K562 (cell line): ENCODE measurements at regions of chr5 and their contacts with region 1.

Region 1: GRCh38 chr5:173764321-173765029 is 123.7 kb upstream of the CPEB4 start:
- DNase-seq: peak; percentile 81 to 87 (median 84)
- ATAC-seq: peak; percentile 85
- H3K4me3 ChIP-seq: no peak overlapping the region; the same call in 1 of the 2 replicates
- H3K27ac ChIP-seq: peak overlapping the region; percentile 71
- H3K4me1 ChIP-seq: peaks cover 44 to 59% of the 10 kb centered on the region in 2 experiments
- H3K27me3 ChIP-seq: no peaks in the 10 kb centered on the region
- CTCF ChIP-seq: peak in 1 of 3 experiments; percentile 20; a peak in 1 of 6 replicates
- EP300 ChIP-seq: peak; percentile 80
- POLR2A ChIP-seq: peak; percentile 55
- RAD21 ChIP-seq: peak; percentile 5 to 17; a peak in 1 of 4 replicates

Region 2: GRCh38 chr5:173625696-173626504 is 138.6 kb before region 1 on chr5:
- CTCF ChIA-PET with region 1: no interaction called
- POLR2A ChIA-PET with region 1: no interaction called
- in situ Hi-C with region 1: no loop called
- intact Hi-C with region 1: loop called (anchors 10 kb)
- DNase-seq: peak in 2 of 4 experiments; percentile 24 to 44
- ATAC-seq: peak; percentile 82
- H3K4me3 ChIP-seq: no peak overlapping the region
- H3K27ac ChIP-seq: no peak overlapping the region
- H3K4me1 ChIP-seq: peaks cover 0 to 19% of the 10 kb centered on the region in 2 experiments; a peak in 4 of 5 replicates
- H3K27me3 ChIP-seq: no peaks in the 10 kb centered on the region
- CTCF ChIP-seq: peak; percentile 38 to 62 (median 53)
- EP300 ChIP-seq: no peak
- POLR2A ChIP-seq: no peak
- RAD21 ChIP-seq: peak; percentile 77 to 83

Region 3: GRCh38 chr5:173753307-173754168 is 10.9 kb before region 1 on chr5:
- CTCF ChIA-PET with region 1: no interaction called
- POLR2A ChIA-PET with region 1: interaction called, 11 read pairs
- in situ Hi-C with region 1: no loop called
- intact Hi-C with region 1: no loop called
- DNase-seq: peak; percentile 31 to 70 (median 46)
- ATAC-seq: peak; percentile 88
- H3K4me3 ChIP-seq: no peak overlapping the region
- H3K27ac ChIP-seq: peak overlapping the region; percentile 38; the same call in 2 of the 3 replicates
- H3K4me1 ChIP-seq: peaks cover 5 to 13% of the 10 kb centered on the region in 2 experiments; a peak in 3 of 5 replicates
- H3K27me3 ChIP-seq: no peaks in the 10 kb centered on the region
- CTCF ChIP-seq: no peak
- EP300 ChIP-seq: no peak
- POLR2A ChIP-seq: no peak
- RAD21 ChIP-seq: peak in 1 of 2 experiments; percentile 4; a peak in 1 of 4 replicates